IMR-90 (cell line): ENCODE measurements at regions of chr14 and their contacts with region 1.

Region 1: DNA sequence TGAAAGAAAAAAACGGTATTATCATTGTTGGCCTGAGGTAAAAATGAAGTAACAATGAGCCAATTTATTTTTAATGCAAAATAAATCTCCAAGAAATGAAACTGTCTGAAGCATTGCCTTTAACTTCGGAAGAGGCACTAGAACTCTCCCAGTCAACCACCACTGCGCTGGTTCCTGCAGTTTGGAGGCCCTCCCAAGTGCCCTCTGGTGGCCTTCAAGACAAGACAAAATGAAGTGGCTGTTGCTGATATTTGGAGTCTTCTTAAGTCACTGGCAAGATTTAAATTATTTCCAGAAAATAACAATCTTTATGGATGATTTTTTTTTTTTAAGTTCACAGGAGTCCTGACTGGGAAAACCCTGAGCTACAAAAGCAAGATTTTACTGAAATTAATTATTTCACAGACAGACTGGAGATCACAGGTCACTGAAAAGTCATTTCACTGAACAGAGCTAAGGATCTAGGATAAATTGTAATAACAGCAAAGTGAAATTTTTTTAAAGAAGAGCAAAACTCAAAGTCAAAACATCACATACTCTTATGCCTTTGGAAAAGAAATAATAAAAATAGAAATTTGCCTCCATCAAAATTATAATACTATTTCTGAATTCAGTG is 58.2 kb downstream of the DICER1 start:
- DNase-seq: peak; percentile 55
- ATAC-seq: peak; percentile 85
- H3K4me3 ChIP-seq: no peak overlapping the region
- H3K27ac ChIP-seq: no peak overlapping the region
- H3K4me1 ChIP-seq: no peaks in the 10 kb centered on the region
- H3K27me3 ChIP-seq: no peaks in the 10 kb centered on the region
- CTCF ChIP-seq: peak; percentile 52
- POLR2A ChIP-seq: no peak
- RAD21 ChIP-seq: peak; percentile 47

Region 2: DNA sequence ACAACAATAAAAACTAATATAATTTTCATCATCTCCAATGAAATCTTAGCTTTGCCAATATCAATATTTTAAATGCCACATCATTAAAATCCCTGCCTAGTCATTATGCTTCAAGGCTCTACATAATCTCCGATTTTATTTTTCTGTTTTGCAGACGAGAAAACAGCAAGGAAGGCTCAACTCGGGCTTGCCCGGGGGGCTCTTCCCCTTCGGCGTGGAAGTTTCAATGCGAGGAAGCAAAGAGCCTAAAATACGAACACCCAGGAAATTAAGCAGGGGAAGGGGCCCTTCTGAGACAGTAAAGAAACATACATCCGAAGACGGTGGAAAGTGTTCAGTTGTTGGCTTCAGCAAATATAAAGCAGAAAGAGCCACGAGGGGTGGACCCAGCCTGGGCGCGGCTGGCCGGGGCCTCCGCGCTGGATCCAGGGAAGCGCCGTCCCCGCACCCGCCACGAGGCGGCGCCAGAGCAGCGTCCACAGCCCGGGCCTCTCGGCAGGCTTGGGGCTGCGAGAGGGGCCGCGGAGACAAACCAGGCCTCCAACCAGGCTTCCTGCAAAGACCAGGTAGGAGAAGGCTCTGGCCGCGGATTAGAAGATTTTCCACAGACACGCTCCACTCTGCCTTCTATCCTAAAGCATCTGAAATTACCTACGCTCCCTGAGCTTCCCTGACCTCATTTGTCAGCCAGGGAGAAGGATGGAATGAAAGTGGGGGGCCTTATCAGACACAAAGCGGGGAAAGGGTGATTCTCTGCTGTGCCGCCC is 409.7 kb before region 1 on chr14:
- CTCF ChIA-PET with region 1: interaction called, 5 read pairs
- POLR2A ChIA-PET with region 1: no interaction called
- dilution Hi-C with region 1: no loop called
- in situ Hi-C with region 1: loop called (anchors 5 kb)
- intact Hi-C with region 1: loop called (anchors 1 kb)
- DNase-seq: peak; percentile 22
- ATAC-seq: peak; percentile 100
- H3K4me3 ChIP-seq: no peak overlapping the region; the same call in 1 of the 2 replicates
- H3K27ac ChIP-seq: no peak overlapping the region
- H3K4me1 ChIP-seq: peaks cover 2% of the 10 kb centered on the region; the same call in 1 of the 2 replicates
- H3K27me3 ChIP-seq: no peaks in the 10 kb centered on the region; the same call in 1 of the 2 replicates
- CTCF ChIP-seq: peak; percentile 92
- POLR2A ChIP-seq: no peak
- RAD21 ChIP-seq: peak; percentile 90

Region 3: GRCh38 chr14:94769391-94770250 is 329.5 kb before region 1 on chr14 and contains the start of gene GSC:
- CTCF ChIA-PET with region 1: no interaction called
- POLR2A ChIA-PET with region 1: no interaction called
- dilution Hi-C with region 1: no loop called
- in situ Hi-C with region 1: no loop called
- intact Hi-C with region 1: loop called (anchors 5 kb)
- DNase-seq: peak; percentile 5
- ATAC-seq: peak; percentile 68
- H3K4me3 ChIP-seq: peak within 1 kb of the TSS; percentile 19; the same call in 1 of the 2 replicates
- H3K27ac ChIP-seq: no peak within 1 kb of the TSS
- H3K4me1 ChIP-seq: no peaks in the 10 kb centered on the region
- H3K27me3 ChIP-seq: peaks cover 80% of the 10 kb centered on the region
- CTCF ChIP-seq: no peak
- POLR2A ChIP-seq: no peak
- RAD21 ChIP-seq: no peak
- total RNA-seq, gene GSC: not detected in 2 replicates

Region 4: GRCh38 chr14:94904636-94905035 is 194.5 kb before region 1 on chr14:
- CTCF ChIA-PET with region 1: no interaction called
- POLR2A ChIA-PET with region 1: no interaction called
- dilution Hi-C with region 1: no loop called
- in situ Hi-C with region 1: no loop called
- intact Hi-C with region 1: loop called (anchors 5 kb)
- DNase-seq: peak; percentile 34
- ATAC-seq: peak; percentile 94
- H3K4me3 ChIP-seq: no peak overlapping the region
- H3K27ac ChIP-seq: peak overlapping the region; percentile 89
- H3K4me1 ChIP-seq: no peaks in the 10 kb centered on the region; the same call in none of the 2 replicates
- H3K27me3 ChIP-seq: no peaks in the 10 kb centered on the region
- CTCF ChIP-seq: no peak
- POLR2A ChIP-seq: no peak
- RAD21 ChIP-seq: no peak

Region 5: GRCh38 chr14:95068080-95068479 is 31.0 kb before region 1 on chr14:
- CTCF ChIA-PET with region 1: no interaction called
- POLR2A ChIA-PET with region 1: no interaction called
- dilution Hi-C with region 1: no loop called
- in situ Hi-C with region 1: no loop called
- intact Hi-C with region 1: no loop called
- DNase-seq: no peak
- ATAC-seq: no peak
- H3K4me3 ChIP-seq: no peak overlapping the region
- H3K27ac ChIP-seq: no peak overlapping the region
- H3K4me1 ChIP-seq: no peaks in the 10 kb centered on the region
- H3K27me3 ChIP-seq: peaks cover 27% of the 10 kb centered on the region
- CTCF ChIP-seq: no peak
- POLR2A ChIP-seq: no peak
- RAD21 ChIP-seq: no peak

Region 6: DNA sequence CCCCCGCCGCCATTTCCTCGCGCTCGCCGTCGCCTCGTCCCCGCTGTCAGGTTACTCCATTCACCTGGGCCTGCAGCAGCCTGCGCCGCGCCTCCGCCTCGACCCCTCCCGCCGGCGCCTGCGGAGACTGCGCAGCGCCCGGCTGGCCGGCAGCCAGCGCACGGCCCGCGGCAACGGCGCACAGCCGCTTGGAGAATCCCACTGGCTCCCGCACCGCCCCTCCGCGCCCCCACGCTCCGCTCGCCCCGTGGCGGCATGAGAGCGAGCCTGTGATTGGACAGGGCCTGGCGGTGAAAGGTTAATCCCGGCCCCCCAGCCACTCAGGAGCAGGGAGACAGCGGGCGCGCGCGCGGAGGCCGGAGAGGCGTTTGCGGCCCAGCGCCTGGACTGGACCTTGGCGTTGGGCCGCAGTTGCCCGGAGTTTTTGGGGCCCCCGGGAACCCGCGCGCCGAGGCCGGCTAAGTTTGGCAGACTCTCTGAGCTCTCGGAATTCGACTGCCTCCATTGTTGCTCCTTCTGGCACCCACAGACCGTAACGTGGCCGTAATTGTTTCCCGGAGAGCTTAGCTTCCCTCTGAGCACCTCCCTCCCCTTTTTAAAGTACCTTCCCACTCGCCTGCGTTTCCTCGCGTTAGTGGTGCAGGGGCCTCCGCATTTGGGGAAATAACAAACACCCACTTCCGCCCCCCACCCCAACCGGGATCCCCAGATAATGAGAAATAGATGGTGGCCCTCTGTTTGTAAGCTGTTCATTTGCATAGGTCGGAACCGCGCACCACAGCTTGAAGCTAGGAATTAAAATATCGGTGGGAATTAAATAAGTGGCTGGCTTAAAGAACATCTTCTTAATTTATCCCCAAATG is 58.5 kb after region 1 on chr14 and contains the start of gene DICER1:
- CTCF ChIA-PET with region 1: no interaction called
- POLR2A ChIA-PET with region 1: no interaction called
- dilution Hi-C with region 1: no loop called
- in situ Hi-C with region 1: no loop called
- intact Hi-C with region 1: loop called (anchors 5 kb)
- DNase-seq: peak; percentile 89
- ATAC-seq: peak; percentile 95
- H3K4me3 ChIP-seq: peak within 1 kb of the TSS; percentile 91
- H3K27ac ChIP-seq: peak within 1 kb of the TSS; percentile 99
- H3K4me1 ChIP-seq: peaks cover 2% of the 10 kb centered on the region; the same call in 1 of the 2 replicates
- H3K27me3 ChIP-seq: no peaks in the 10 kb centered on the region
- CTCF ChIP-seq: no peak
- POLR2A ChIP-seq: peak; percentile 50; the same call in 1 of the 2 replicates
- RAD21 ChIP-seq: no peak
- total RNA-seq, gene DICER1: 41.7 and 49.5 TPM in 2 replicates

Region 7: DNA sequence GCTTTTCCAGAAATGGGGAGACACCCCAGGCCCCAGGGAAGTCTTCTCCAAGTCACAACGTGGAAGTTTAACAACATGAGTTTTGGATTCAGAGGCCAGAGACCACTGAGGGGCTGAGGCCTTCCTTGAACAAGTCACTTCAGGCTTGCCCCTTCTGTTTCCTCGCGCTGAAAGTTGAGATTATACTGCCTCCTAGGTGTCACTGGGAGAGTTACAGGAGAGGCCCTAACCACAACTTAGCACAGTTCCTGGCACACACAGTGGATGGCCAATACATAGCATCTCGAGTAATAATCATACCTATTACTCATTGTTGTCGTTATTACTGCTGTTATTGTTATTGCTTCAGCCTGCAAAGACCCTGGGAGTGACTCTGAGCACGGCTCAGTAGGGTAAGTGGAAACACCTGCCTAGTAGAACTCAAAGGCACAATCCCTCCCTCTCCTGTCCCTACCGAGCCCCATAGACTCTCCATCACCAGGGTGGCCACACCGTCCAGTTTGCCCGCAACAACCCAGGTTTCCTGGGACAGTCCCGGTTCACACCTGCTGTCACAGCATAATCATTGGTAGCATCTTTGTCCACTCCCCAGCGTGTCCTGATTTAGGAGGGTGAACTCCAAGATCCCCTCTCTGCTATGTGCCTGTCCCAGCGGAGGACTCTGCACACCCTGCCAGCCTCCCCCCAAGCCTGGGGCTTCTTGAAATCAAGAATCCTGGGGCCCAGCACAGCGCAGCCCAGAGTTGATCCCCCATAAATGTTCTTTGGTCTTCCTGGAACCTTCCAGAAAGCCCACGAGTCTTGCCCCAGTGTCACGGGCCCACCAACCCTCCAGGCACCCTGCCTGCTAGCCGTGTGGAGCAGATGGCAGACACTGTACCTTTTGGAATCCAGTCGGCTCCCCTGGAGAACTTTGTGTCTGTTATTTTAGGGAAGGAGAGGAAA is 332.4 kb after region 1 on chr14:
- CTCF ChIA-PET with region 1: no interaction called
- POLR2A ChIA-PET with region 1: no interaction called
- dilution Hi-C with region 1: no loop called
- in situ Hi-C with region 1: no loop called
- intact Hi-C with region 1: loop called (anchors 5 kb)
- DNase-seq: peak; percentile 17
- ATAC-seq: no peak
- H3K4me3 ChIP-seq: no peak overlapping the region
- H3K27ac ChIP-seq: no peak overlapping the region
- H3K4me1 ChIP-seq: no peaks in the 10 kb centered on the region
- H3K27me3 ChIP-seq: no peaks in the 10 kb centered on the region
- CTCF ChIP-seq: peak; percentile 51
- POLR2A ChIP-seq: no peak
- RAD21 ChIP-seq: peak; percentile 37; the same call in 1 of the 2 replicates